ENCODE measurements at regions of chr20 and their contacts with region 1.

Region 1: GRCh38 chr20:41889126-41889870 is 271.1 kb upstream of the CHD6 start:
- DNase-seq: peak; percentile 18
- ATAC-seq: peak; percentile 36; the same call in 1 of the 3 replicates
- H3K4me3 ChIP-seq: no peak overlapping the region
- H3K27ac ChIP-seq: no peak overlapping the region
- H3K4me1 ChIP-seq: no peaks in the 10 kb centered on the region
- H3K27me3 ChIP-seq: peaks cover 2 to 5% of the 10 kb centered on the region in 2 experiments; a peak in 2 of 5 replicates
- CTCF ChIP-seq: peak; percentile 46
- EP300 ChIP-seq: no peak
- POLR2A ChIP-seq: no peak
- RAD21 ChIP-seq: no peak

Region 2: DNA sequence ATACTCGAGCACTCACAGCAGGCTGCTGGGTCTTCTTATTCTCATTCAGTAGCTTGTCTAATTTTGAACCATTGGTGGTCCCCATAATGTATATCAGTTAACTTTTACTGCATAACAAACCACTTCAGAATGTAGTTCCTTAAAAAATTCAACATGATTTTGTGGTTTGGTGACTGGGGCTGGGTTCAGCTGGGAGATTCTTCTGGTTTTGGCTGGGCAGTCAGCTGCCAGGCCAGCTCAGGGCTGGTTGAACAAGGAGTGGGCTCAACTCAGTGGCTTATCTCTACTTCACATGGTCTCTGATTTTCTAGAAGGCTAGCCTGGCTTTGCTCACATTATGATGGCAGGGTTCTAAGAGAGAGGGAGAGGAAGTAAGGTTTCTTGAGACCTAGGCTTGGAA is 21.3 kb after region 1 on chr20:
- CTCF ChIA-PET with region 1: no interaction called
- POLR2A ChIA-PET with region 1: no interaction called
- in situ Hi-C with region 1: no loop called
- intact Hi-C with region 1: no loop called
- DNase-seq: no peak
- ATAC-seq: no peak
- H3K4me3 ChIP-seq: no peak overlapping the region
- H3K27ac ChIP-seq: no peak overlapping the region
- H3K4me1 ChIP-seq: no peaks in the 10 kb centered on the region
- H3K27me3 ChIP-seq: no peaks in the 10 kb centered on the region; a peak in 2 of 5 replicates
- CTCF ChIP-seq: no peak
- EP300 ChIP-seq: no peak
- POLR2A ChIP-seq: no peak
- RAD21 ChIP-seq: no peak

Region 3: DNA sequence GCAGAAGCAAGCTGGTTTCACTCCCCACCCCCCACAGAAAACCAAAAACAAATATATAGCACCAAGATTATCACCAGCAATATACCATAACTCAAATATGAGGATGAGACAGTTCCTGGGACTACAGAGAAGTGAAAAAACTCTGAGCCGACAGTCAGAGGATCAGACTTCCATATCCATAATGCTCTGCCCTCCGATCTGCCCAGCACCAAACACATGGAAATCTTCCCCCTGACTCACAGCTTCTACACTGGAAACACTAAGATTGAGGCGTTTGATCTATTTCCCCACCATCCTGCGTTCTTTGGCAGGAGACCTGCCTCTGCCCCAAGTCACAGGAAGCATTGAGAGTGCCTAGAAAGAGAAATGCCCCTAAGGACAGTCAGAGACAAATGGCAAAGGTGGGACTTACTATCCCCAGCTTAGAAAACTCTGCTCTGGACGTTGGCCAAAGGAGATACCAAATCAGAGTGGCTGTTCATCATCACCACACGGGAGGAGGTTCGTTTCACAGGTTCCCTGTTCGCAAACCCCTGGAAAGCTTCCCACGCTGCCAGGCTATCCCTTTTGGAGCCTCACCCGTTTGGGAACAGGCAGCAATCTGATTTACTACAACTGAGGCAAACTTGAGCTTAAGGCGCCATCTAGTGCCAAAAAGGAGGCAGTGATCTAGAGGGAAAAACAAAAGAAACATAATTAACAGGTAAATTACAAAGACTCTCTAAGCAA is 1519.7 kb after region 1 on chr20:
- CTCF ChIA-PET with region 1: no interaction called
- POLR2A ChIA-PET with region 1: no interaction called
- in situ Hi-C with region 1: no loop called
- intact Hi-C with region 1: loop called (anchors 5 kb)
- DNase-seq: peak; percentile 50
- ATAC-seq: peak; percentile 88
- H3K4me3 ChIP-seq: no peak overlapping the region
- H3K27ac ChIP-seq: no peak overlapping the region
- H3K4me1 ChIP-seq: no peaks in the 10 kb centered on the region
- H3K27me3 ChIP-seq: no peaks in the 10 kb centered on the region; a peak in 1 of 5 replicates
- CTCF ChIP-seq: peak; percentile 92
- EP300 ChIP-seq: no peak
- POLR2A ChIP-seq: no peak
- RAD21 ChIP-seq: peak; percentile 75